ENCODE measurements at regions of chr18 and their contacts with region 1.

Region 1: DNA sequence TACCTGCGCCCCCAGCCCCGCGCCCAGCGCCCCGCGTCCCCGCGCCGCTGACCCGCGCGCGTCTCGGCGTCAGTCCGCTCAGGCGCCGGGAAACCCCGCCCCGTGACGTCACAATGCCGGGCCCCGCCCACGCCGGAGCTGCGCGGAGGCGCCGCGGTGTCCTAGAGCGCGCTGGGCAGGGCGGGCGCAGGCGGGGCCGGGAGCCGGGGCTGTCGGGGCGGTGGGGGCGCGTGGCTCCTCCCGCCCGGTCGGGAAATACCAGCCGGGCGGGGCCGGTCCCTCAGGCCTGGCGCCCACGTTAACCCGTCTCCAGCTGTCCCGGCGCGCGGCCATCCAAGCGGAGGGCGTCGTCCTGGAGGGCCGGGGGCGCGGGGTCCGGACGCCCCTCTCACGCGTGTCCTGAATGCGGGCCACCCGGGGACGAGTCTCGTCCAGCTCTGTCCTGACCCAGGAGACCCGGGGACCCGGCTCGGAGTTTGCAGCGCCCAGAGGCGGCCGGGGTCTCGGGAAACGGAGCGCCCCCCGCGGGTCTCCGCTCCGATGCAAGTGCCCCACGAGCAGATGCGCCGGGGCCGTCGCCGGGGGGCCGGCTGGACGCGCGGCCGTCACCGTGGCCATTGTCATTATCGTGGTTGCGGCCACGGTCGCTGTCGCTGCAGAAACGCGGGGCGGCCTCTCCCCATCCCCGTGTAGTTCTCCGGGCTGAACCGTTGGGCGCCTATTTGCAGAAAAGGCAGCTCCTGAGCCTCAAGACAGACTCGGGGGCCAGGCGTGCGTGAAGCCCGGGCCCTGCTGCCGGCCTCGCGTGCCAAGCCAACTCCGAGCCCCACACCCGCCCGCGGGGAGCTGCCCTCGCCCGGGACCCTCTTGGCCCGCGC is at the start of gene SLC66A2:
- DNase-seq: peak; percentile 94
- H3K4me3 Mint-ChIP-seq: peak within 1 kb of the TSS; percentile 78
- H3K27ac Mint-ChIP-seq: peak within 1 kb of the TSS; percentile 55
- H3K4me1 Mint-ChIP-seq: peaks cover 31% of the 10 kb centered on the region
- H3K27me3 Mint-ChIP-seq: no peaks in the 10 kb centered on the region
- total RNA-seq, gene SLC66A2: 26.0 to 26.8 TPM

Region 2: DNA sequence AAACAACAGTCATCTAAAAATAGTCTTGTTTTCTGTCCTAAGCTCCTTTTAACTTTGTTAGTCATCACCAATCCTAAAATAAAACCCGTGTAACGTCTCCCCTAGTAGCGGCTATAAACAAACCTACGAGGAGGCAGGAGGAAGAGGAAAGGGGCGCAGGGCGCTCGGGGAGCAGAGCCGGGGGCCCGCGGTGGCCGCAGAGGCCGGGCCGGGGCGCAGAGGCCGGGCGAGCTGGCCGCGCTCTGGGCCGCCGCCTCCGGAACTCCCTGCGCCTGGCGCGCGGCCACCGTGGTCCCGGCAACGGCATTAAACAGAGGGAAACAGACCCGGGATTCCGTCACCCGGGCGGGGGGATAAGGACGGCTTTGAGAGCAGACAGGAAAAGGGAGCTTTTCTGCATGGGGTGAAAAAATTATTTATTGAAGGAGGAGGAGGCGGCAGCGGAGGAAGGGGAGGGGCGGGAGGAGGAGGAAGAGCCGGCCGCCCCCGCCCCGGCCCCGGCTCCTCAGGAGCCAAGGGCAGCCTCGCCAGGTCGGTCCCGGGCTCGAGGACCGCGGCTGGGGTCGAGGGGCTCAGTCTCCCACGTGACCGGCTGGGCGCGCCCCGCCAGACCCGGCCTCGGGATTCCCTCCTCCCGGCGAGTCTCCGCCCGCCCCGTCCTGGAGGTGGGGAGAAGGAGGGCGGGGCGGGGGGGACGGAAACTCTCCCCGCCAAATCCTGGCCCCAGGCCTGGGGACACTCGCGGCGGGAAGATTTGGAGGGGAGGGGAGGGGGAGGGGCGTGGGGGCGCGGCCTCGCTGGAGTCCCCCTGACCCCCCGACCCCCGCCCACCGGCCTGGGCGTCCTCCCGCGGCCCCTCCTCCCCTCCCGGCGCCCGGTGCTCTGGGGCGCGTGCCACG is 557.9 kb before region 1 on chr18:
- CTCF ChIA-PET with region 1: no interaction called
- intact Hi-C with region 1: loop called (anchors 5 kb)
- DNase-seq: peak; percentile 73
- H3K4me3 Mint-ChIP-seq: peak overlapping the region; percentile 74
- H3K27ac Mint-ChIP-seq: peak overlapping the region; percentile 71
- H3K4me1 Mint-ChIP-seq: peaks cover 34% of the 10 kb centered on the region
- H3K27me3 Mint-ChIP-seq: peaks cover 5% of the 10 kb centered on the region

Region 3: GRCh38 chr18:79411614-79412526 is 539.9 kb before region 1 on chr18:
- CTCF ChIA-PET with region 1: no interaction called
- intact Hi-C with region 1: no loop called
- DNase-seq: no peak
- H3K4me3 Mint-ChIP-seq: no peak overlapping the region
- H3K27ac Mint-ChIP-seq: no peak overlapping the region
- H3K4me1 Mint-ChIP-seq: peaks cover 39% of the 10 kb centered on the region
- H3K27me3 Mint-ChIP-seq: no peaks in the 10 kb centered on the region

Region 4: DNA sequence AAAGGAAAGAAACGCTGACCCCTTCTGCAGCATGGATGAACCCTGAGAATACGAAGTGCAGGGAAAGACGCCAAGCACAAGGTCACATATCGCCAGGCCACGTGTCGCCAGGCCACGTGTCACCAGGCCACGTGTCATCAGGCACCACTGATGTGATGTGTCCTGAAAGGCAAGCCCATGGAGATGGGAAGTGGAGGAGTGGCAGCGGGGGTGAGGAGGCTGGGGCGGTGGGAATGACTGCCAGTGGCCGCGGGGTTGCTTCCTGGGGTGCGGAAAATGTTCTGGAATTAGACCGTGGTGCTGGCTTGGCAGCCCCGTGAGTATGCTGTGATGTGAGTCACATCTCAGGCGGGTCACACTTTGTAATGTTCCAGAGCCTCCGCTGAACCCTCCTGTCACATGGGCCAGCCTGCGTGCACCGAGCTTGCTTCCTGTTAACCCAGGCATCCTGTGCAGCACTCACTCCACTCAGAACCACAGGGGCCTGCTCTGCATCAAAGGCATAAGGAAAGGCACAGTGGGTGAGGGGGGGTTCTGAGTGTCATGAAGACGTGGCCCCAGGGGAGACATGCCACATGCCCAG is 39.3 kb before region 1 on chr18:
- CTCF ChIA-PET with region 1: no interaction called
- intact Hi-C with region 1: loop called (anchors 2 kb)
- DNase-seq: peak; percentile 71
- H3K4me3 Mint-ChIP-seq: no peak overlapping the region
- H3K27ac Mint-ChIP-seq: peak overlapping the region; percentile 46
- H3K4me1 Mint-ChIP-seq: peaks cover 27% of the 10 kb centered on the region
- H3K27me3 Mint-ChIP-seq: no peaks in the 10 kb centered on the region

Region 5: DNA sequence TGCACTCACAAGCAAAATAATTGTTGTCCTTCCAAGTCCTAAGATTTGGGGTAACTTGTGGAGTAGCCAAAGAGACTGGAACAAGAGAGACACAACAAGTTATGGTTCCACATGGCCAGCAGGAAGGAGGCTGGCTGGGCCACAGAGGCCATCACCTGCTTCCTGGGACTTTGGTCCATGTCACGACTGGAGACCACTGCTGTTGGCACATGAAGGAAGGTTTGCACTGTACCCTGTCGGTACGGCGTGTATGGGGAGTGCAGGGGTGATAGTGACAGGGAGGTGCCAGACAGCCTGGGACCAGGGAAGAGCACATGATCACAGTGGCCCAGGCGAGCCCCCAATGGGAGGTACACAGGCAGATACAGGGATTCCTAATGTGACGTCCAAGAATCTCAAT is 15.9 kb before region 1 on chr18:
- CTCF ChIA-PET with region 1: no interaction called
- intact Hi-C with region 1: no loop called
- DNase-seq: no peak
- H3K4me3 Mint-ChIP-seq: no peak overlapping the region
- H3K27ac Mint-ChIP-seq: no peak overlapping the region
- H3K4me1 Mint-ChIP-seq: no peaks in the 10 kb centered on the region
- H3K27me3 Mint-ChIP-seq: no peaks in the 10 kb centered on the region

Region 6: DNA sequence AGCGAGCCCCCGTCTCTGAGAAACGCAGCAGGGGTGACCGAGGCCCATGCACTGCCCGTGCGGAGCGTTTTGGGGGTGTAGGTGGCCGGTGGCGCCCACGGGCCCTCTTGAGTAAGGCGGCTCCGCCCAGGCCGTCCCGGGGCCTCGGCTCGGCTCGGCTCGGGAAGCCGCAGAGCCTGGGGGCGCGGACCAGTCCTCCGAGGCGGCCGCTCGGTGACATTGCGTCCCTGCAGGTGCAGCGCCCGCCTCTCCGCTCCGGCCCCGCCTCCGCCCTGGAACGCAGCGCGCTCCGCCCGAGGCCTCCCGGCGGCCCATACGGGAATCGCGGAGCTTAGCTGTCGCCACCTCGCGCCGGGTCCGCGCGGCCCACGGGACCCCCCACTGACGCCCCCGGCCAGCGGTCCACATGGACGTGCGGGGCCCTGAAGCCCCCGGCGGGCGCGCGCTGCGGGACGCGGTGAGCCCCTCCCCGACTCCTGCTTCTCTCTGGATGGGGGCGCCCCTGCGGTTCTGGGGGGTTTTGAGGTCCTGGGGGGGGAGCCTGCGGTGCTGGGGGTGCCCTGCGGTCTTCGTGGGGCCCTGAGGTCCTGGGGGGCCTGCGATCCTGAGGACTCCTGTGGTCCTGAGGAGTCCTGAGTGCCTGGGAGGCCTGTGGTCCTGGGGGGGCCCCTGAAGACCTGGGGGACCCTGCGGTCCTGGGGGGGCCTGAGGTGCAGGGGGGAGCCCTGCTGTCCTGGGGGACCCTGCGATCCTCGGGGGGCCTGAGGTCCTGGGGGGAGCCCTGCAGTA is 12.7 kb after region 1 on chr18 and contains the start of gene HSBP1L1:
- CTCF ChIA-PET with region 1: no interaction called
- intact Hi-C with region 1: loop called (anchors 1 kb)
- DNase-seq: peak; percentile 78
- H3K4me3 Mint-ChIP-seq: peak within 1 kb of the TSS; percentile 71
- H3K27ac Mint-ChIP-seq: peak within 1 kb of the TSS; percentile 80
- H3K4me1 Mint-ChIP-seq: peaks cover 23% of the 10 kb centered on the region
- H3K27me3 Mint-ChIP-seq: no peaks in the 10 kb centered on the region
- total RNA-seq, gene HSBP1L1: 14.2 to 14.8 TPM

Region 7: GRCh38 chr18:80034068-80034851 is 82.4 kb after region 1 on chr18 and contains the start of gene RBFA:
- CTCF ChIA-PET with region 1: interaction called, 3 read pairs
- intact Hi-C with region 1: loop called (anchors 1 kb)
- DNase-seq: peak; percentile 100
- H3K4me3 Mint-ChIP-seq: peak within 1 kb of the TSS; percentile 82
- H3K27ac Mint-ChIP-seq: peak within 1 kb of the TSS; percentile 73
- H3K4me1 Mint-ChIP-seq: peaks cover 26% of the 10 kb centered on the region
- H3K27me3 Mint-ChIP-seq: no peaks in the 10 kb centered on the region
- total RNA-seq, gene RBFA: 35.7 to 36.0 TPM

Region 8: GRCh38 chr18:80171054-80171872 is 219.4 kb after region 1 on chr18:
- CTCF ChIA-PET with region 1: no interaction called
- intact Hi-C with region 1: no loop called
- DNase-seq: peak; percentile 67
- H3K4me3 Mint-ChIP-seq: no peak overlapping the region
- H3K27ac Mint-ChIP-seq: no peak overlapping the region
- H3K4me1 Mint-ChIP-seq: peaks cover 6% of the 10 kb centered on the region
- H3K27me3 Mint-ChIP-seq: peaks cover 45% of the 10 kb centered on the region

Region 9: DNA sequence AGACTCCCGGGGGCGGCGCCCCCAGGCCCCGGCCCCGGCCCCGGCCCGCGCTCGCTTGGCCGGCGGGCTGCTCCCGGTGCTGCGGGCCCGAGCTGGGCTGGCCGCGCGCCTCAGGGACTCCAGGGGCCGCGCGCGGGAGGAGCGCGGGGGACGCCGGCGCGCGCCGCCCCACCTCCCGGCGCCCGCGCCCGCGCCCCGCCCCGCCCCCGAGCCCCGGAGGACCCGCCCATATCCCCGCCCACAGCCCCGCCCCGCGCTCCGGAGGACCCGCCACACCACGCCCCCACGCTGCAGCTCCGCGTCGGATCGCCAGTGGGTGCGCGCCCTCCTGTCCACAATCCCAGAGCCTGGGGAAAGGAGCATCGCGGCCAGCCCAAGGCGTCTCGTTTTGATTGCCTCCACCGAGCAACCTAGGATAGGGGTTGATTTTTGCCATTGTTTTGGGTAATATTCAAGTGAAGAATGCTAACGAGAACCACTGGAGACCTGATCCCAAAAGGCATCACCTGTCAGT is 295.6 kb after region 1 on chr18 and contains the start of gene PARD6G:
- CTCF ChIA-PET with region 1: no interaction called
- intact Hi-C with region 1: no loop called
- DNase-seq: peak; percentile 53
- H3K4me3 Mint-ChIP-seq: peak within 1 kb of the TSS; percentile 36
- H3K27ac Mint-ChIP-seq: no peak within 1 kb of the TSS
- H3K4me1 Mint-ChIP-seq: peaks cover 4% of the 10 kb centered on the region
- H3K27me3 Mint-ChIP-seq: peaks cover 31% of the 10 kb centered on the region
- total RNA-seq, gene PARD6G: 0.10 TPM in 1 of 2 experiments, not detected in the other

Measured in activated naive CD4-positive, alpha-beta T cell treated with anti-CD3 and anti-CD28 coated beads for 36 hours (primary cell).